T-cell (primary cell): ENCODE measurements at regions of chr9 and their contacts with region 1.

Region 1: DNA sequence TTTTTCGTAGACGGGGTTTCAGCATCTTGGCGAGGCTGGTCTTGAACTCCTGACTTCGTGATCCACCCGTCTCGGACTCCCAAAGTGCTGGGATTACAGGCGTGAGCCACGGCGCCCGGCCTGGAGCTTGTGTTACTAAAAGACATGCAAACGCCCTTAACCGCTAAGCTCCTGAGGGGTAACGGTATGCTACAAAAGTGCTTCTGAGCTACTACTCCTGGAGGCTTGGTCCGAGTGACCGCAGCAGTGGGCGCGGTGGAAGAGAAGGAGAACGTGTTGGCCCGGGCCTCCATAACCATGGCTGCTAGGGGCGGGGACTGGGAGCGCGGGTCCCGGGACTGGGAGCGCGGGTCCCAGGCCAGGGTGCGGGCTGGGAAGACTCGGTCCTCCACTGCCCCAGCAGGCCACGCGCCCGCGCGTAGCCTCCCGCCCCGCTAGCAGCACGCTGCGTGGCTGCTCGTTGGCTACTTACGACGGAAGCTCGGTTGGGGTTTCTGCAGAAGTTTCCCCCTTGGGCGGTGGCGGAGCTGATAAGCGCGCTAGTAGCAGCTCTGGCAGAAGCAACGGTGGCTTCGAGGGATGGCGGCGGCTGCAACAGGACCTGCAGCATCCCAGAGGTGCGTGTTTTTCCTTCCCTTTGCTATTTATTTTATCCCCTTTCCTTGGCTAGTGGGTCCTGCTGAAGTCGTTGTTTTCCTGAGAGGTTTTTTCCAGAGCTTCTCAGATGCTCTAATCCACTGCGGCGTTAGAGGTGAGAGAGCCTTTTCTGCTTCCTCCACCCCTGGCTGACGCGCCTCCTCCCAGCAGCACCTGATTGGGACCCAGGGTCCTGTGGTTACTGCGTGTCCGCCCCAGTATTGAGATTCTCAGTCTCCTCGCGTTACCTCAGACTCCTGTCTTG is 69.3 kb upstream of the CCDC180 start:
- DNase-seq: peak; percentile 57 to 84 (median 73)
- ATAC-seq: peak; percentile 94 to 96 (median 96)
- H3K4me3 ChIP-seq: peak overlapping the region; percentile 66 to 74
- H3K4me3 Mint-ChIP-seq: peak overlapping the region; percentile 85 to 95 (median 91)
- H3K27ac ChIP-seq: peak overlapping the region; percentile 69
- H3K27ac Mint-ChIP-seq: peak overlapping the region; percentile 92 to 96
- H3K4me1 ChIP-seq: peaks cover 0 to 9% of the 10 kb centered on the region in 2 experiments
- H3K4me1 Mint-ChIP-seq: peaks cover 21 to 32% (median 27%) of the 10 kb centered on the region in 3 donors
- H3K27me3 ChIP-seq: no peaks in the 10 kb centered on the region
- H3K27me3 Mint-ChIP-seq: no peaks in the 10 kb centered on the region

Region 2: DNA sequence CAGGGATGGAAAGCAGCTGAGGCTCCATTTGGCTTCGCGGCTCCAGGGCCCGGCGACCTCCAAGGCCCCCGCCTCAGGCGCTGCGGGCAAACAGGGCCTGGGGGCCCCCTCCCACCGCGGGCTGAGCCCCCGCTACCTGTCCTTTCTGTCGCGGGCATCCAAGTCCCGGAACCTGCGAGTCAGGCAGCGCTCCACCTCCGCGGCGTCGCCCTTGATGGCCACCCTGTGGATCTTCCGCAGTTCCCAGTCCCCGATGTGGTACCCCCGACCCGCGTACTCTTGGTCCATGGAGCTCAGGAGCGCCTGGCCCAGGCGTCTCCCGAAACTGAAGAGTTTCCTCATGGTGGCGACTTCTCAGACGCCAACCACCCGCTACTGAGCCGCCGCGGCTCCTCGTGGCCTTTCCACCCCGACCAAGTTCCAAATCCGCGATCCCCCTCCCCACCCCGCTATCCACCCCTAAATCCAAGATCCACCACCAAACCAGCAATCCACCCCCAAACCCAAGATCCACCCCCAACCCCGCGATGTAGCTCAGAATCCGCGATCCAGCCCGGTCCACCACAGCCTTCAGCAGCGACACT is 17.2 kb before region 1 on chr9:
- CTCF ChIA-PET with region 1: interaction called in 1 of 2 experiments, 6 read pairs
- POLR2A ChIA-PET with region 1: interaction called in 1 of 2 experiments, 14 read pairs
- DNase-seq: peak in 2 of 35 experiments; percentile 3 to 4
- ATAC-seq: peak; percentile 10 to 29 (median 22)
- H3K4me3 ChIP-seq: peak overlapping the region; percentile 28 to 42
- H3K4me3 Mint-ChIP-seq: peak overlapping the region; percentile 77 to 86 (median 81)
- H3K27ac ChIP-seq: no peak overlapping the region
- H3K27ac Mint-ChIP-seq: no peak overlapping the region
- H3K4me1 ChIP-seq: peaks cover 0 to 13% of the 10 kb centered on the region in 2 experiments
- H3K4me1 Mint-ChIP-seq: peaks cover 5 to 11% (median 10%) of the 10 kb centered on the region in 3 donors
- H3K27me3 ChIP-seq: peaks cover 8 to 23% of the 10 kb centered on the region in 2 experiments
- H3K27me3 Mint-ChIP-seq: peaks cover 47% of the 10 kb centered on the region in 2 donors